ENCODE measurements at regions of chr16 and their contacts with region 1.

Region 1: DNA sequence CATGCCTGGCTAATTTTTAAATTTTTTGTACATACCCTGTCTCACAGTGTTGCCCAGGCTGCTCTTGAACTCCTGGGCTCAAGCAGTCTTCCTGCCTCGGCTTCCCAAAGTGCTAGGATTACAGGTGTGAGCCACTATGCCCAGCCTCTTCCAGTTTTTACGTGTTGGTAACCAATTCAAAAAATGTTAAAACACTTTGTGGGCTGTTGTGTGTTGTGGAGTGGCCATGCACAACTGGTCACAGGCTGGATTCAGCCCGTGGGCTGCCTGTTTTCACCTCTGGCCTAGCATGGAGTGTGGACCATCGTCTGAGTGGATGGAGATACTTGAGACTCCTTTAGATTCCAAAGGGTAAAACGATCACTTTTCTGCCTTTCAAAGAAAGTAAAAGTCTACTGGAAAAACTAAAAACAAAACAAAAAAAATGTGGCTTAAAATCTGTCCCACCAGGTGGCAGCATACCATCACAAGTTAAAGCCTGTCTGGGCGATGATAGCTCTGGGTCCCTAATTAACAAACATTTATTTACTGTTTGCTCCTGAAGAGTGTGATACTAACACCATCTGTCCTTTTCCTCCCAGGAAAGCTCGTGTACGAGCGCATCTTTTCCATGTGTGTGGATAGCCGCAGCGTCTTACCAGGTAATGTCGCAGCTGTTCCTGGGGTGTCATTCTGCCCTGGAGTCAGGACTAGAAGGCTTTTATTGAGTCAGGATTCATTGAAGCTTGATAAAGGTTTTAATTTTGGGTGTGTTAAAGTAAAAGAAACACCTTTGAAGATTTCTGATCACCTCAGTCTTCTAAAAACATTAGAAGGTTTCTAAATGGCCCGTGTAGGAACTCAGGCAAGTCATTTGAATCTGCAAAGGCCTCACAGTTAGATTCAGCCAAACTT is 45.8 kb downstream of the VPS35L start:
- DNase-seq: peak; percentile 46 to 53
- H3K4me3 ChIP-seq: no peak overlapping the region
- H3K27ac ChIP-seq: no peak overlapping the region
- H3K4me1 ChIP-seq: peaks cover 29% of the 10 kb centered on the region
- H3K27me3 ChIP-seq: no peaks in the 10 kb centered on the region
- CTCF ChIP-seq: peak; percentile 88

Region 2: DNA sequence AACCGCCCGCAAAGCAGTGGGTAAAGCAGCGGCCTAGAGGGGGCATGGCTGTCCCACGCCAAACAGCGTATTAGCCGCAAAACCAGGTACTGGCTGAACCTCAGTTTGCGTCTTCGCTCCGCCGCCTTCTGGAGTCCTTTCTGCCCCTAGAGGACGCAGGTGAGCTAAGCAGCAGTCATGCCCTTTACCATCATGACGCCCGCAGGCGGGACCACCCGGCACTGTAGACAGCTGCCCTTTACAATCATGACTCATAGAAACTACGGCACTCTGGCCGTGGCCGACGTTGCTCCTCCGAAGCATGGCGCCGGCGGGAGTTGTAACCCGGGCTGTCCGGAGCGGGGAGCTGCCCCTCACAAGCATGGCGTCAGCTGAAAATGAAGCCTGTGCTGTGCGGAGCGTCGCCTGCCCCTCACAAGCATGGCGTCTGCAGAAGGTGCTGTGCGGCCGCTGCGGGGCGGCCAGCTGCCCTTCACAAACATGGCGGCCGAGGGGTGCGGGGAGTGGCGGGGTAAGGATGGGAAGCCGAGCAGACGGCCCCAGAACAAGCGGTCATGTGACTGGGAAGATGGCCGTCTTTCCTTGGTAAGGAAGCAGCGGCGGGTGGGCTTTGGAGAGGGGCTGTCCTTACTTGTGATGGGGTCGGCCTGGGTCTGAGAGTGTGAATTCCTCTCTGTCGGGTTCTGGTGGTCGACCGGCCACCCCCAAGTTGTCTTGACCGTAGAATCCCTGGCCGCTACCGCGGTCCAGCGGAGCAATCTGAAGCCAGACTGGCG is 46.0 kb before region 1 on chr16 and contains the start of gene VPS35L:
- CTCF ChIA-PET with region 1: no interaction called
- POLR2A ChIA-PET with region 1: interaction called, 4 read pairs
- intact Hi-C with region 1: loop called (anchors 2 kb)
- DNase-seq: peak; percentile 73 to 92
- H3K4me3 ChIP-seq: peak within 1 kb of the TSS; percentile 61
- H3K27ac ChIP-seq: no peak within 1 kb of the TSS
- H3K4me1 ChIP-seq: no peaks in the 10 kb centered on the region; the same call in 1 of the 2 replicates
- H3K27me3 ChIP-seq: no peaks in the 10 kb centered on the region
- CTCF ChIP-seq: peak; percentile 62
- total RNA-seq, gene VPS35L: 11.7 and 12.1 TPM in 2 replicates

Region 3: DNA sequence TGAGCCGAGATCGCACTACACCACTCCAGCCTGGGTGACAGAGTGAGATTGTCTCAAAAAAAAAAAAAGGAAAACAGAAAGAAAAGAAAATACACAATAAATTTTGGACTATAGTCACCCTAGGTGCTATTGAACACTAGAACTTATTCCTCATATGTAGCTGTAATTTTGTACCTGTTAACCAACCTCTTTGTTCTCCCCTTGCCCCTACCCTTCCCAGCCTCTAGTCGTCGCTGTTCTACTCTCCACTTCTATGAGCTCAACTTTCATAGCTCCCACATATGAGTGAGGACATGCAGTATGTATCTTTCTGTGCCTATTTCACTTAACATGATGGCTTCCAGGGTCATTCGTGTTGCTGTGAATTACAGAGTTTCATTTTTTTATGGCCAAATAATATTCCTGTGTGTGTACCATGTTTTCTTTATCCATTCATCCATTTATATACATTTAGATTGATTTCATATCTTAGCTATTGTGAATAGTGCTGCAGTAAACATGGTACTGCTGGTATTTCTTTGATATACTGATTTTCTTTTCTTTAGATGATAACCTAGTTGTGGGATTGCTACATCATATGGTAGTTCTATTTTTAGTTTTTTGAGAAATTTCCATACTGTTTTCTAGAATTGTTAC is 17.5 kb before region 1 on chr16:
- CTCF ChIA-PET with region 1: interaction called, 47 read pairs
- POLR2A ChIA-PET with region 1: interaction called, 6 read pairs
- intact Hi-C with region 1: no loop called
- DNase-seq: peak in 1 of 2 experiments; percentile 46
- H3K4me3 ChIP-seq: no peak overlapping the region
- H3K27ac ChIP-seq: no peak overlapping the region
- H3K4me1 ChIP-seq: no peaks in the 10 kb centered on the region
- H3K27me3 ChIP-seq: no peaks in the 10 kb centered on the region
- CTCF ChIP-seq: peak; percentile 91

Region 4: GRCh38 chr16:19804538-19805323 is 203.4 kb after region 1 on chr16:
- CTCF ChIA-PET with region 1: no interaction called
- POLR2A ChIA-PET with region 1: no interaction called
- intact Hi-C with region 1: loop called (anchors 10 kb)
- DNase-seq: peak; percentile 80 to 83
- H3K4me3 ChIP-seq: no peak overlapping the region
- H3K27ac ChIP-seq: peak overlapping the region; percentile 51
- H3K4me1 ChIP-seq: peaks cover 39% of the 10 kb centered on the region
- H3K27me3 ChIP-seq: no peaks in the 10 kb centered on the region
- CTCF ChIP-seq: no peak

Measured in PC-9 (cell line).